Ovary (tissue), 10 donors: ENCODE measurements at regions of chr1 and their contacts with region 1.

Region 1: GRCh38 chr1:221035680-221036153 is 156.5 kb downstream of the HLX start:
- DNase-seq: no peak
- H3K4me3 ChIP-seq: no peak overlapping the region
- H3K27ac ChIP-seq: no peak overlapping the region
- H3K4me1 ChIP-seq: no peaks in the 10 kb centered on the region
- H3K27me3 ChIP-seq: no peaks in the 10 kb centered on the region
- CTCF ChIP-seq: no peak
- EP300 ChIP-seq: no peak
- POLR2A ChIP-seq: no peak

Region 2: DNA sequence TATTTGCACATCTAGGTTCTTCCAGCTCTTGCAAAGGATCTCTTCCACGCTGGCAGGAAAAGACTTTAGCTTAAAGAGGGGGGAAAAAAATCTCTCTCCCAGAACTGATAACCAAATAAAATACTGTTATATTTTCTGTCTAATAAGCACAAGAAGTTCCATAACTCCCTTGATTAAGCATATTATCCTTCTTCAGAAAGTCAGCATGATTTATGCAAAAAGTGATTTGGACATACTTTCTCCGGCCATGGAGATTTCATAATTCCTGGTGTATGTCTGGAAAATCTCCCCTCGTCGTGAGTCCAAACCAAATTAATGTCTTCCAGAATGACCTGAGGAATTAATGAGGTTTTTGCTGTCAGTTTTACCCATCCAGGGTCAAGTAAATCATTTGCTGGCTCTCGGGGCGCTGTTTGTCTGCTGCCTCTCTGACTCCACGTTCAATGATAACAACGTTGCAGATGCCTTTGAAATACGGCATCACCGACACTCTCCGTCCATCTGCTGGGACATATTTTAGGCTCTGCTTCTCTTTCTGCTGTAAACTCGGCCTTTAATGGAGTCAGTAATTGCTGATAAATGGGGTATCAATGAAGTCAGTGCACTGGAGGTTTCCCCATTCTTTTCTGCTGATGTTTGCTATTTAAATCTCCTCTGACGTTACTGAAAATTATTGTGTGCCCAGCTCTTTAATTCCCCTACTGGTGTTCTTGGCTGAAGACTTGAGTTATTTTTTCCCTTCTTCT is 43.6 kb before region 1 on chr1:
- intact Hi-C with region 1: loop called in 1 of 4 experiments (anchors 2 kb)
- DNase-seq: peak in 1 of 5 donors; percentile 17
- H3K4me3 ChIP-seq: no peak overlapping the region
- H3K27ac ChIP-seq: no peak overlapping the region
- H3K4me1 ChIP-seq: no peaks in the 10 kb centered on the region
- H3K27me3 ChIP-seq: no peaks in the 10 kb centered on the region
- CTCF ChIP-seq: no peak
- EP300 ChIP-seq: no peak
- POLR2A ChIP-seq: no peak

Region 3: GRCh38 chr1:221069178-221069903 is 33.6 kb after region 1 on chr1:
- intact Hi-C with region 1: no loop called
- DNase-seq: no peak
- H3K4me3 ChIP-seq: no peak overlapping the region
- H3K27ac ChIP-seq: no peak overlapping the region
- H3K4me1 ChIP-seq: no peaks in the 10 kb centered on the region
- H3K27me3 ChIP-seq: no peaks in the 10 kb centered on the region
- CTCF ChIP-seq: no peak
- EP300 ChIP-seq: no peak
- POLR2A ChIP-seq: no peak

Region 4: DNA sequence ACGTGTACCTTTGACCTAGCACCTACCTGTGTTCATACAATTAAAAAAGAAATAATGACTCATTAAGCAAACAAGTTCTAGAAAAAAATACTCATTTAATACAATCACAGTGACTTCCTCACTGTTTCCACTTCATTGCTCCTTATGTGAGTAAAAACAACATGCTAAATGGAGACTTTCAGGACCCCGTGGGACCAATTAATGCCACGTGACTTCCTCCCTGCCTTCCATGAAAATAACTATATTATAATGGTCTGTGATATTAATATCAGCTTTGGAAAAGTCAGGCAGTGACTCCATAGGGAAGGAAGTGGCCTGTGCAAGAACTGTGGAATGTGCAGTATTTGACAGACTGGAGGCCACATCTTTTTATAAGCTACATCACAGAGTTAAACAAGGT is 181.3 kb after region 1 on chr1:
- intact Hi-C with region 1: no loop called
- DNase-seq: no peak
- H3K4me3 ChIP-seq: no peak overlapping the region
- H3K27ac ChIP-seq: no peak overlapping the region
- H3K4me1 ChIP-seq: no peaks in the 10 kb centered on the region
- H3K27me3 ChIP-seq: no peaks in the 10 kb centered on the region
- CTCF ChIP-seq: no peak
- EP300 ChIP-seq: no peak
- POLR2A ChIP-seq: no peak